Calu3 (cell line): ENCODE measurements at regions of chr3 and their contacts with region 1.

Region 1: GRCh38 chr3:190378240-190378891 is 9.6 kb upstream of the CLDN16 start:
- DNase-seq: no peak
- H3K4me3 Mint-ChIP-seq: no peak overlapping the region
- H3K27ac Mint-ChIP-seq: no peak overlapping the region
- H3K4me1 Mint-ChIP-seq: peaks cover 83% of the 10 kb centered on the region
- H3K27me3 Mint-ChIP-seq: no peaks in the 10 kb centered on the region
- CTCF ChIP-seq: no peak

Region 2: DNA sequence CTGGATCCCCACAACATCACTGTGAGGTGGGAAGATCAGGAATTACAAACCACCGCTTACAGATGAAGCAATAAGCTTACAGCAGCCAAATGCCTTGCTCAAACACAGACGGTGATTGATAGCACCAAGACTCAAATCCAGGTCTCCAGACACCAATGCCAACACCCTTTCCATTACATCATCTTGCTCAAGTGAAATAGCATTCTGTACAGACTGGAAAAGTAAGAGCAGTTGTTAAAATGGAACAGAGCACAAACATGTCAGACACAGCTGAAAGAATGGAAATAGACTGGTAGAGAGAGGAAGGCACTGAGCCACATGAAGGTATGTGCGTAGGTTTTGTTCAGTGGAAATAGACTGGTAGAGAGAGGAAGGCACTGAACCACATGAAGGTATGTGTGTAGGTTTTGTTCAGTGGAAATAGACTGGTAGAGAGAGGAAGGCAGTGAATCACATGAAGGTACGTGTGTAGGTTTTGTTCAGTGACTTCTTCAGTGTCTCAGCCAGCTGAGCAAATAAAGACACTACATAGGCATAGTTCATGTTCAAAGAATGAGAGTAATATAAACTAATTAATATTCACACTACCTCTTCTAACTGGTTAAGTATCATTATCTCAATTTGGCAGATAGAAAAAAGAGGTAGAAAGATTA is 71.7 kb before region 1 on chr3:
- CTCF ChIA-PET with region 1: no interaction called
- intact Hi-C with region 1: loop called (anchors 1 kb)
- DNase-seq: peak; percentile 67
- H3K4me3 Mint-ChIP-seq: peak overlapping the region; percentile 51
- H3K27ac Mint-ChIP-seq: peak overlapping the region; percentile 90
- H3K4me1 Mint-ChIP-seq: peaks cover 61% of the 10 kb centered on the region
- H3K27me3 Mint-ChIP-seq: no peaks in the 10 kb centered on the region
- CTCF ChIP-seq: no peak

Region 3: DNA sequence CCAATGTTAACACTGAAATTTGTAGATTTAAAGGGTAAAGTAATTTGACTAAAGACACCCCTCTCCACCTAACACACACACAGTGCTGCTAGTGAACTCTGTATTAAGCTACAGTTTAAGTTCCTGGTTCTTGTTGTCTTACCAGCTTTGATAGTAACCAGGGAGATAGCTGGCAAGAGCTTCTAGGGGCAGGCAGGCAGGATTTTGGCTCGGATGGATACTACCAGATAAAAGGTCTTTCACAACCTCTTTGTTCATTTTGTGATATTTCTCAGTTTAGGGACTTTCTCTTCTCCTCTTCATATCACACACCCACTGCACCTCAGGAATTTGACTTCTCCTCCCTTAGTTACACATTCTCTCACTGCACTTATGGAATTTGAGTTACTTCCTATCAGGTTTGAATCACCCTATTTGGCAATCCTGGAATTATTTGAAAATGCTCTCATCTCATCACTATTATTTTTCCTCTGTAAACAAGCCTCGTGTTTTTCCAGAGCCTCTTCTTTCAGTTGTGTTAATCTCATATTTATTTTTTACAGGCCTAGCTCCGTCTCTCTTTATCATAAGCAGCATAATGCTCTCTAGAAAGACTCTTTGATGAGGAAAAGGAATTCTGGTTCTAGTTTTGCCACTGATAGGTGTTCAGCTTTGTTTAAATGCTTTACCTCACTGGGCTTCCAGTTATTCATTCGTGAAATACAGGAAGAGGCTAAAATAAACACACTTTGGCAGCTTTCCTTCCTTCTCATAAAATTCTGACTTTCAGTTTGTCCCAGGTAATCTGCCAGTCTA is 33.1 kb before region 1 on chr3:
- CTCF ChIA-PET with region 1: interaction called, 29 read pairs
- intact Hi-C with region 1: loop called (anchors 1 kb)
- DNase-seq: peak; percentile 66
- H3K4me3 Mint-ChIP-seq: peak overlapping the region; percentile 51
- H3K27ac Mint-ChIP-seq: peak overlapping the region; percentile 98
- H3K4me1 Mint-ChIP-seq: peaks cover 51% of the 10 kb centered on the region
- H3K27me3 Mint-ChIP-seq: no peaks in the 10 kb centered on the region
- CTCF ChIP-seq: no peak

Region 4: GRCh38 chr3:190356246-190356645 is 22.1 kb before region 1 on chr3:
- CTCF ChIA-PET with region 1: interaction called, 4 read pairs
- intact Hi-C with region 1: loop called (anchors 1 kb)
- DNase-seq: no peak
- H3K4me3 Mint-ChIP-seq: no peak overlapping the region
- H3K27ac Mint-ChIP-seq: no peak overlapping the region
- H3K4me1 Mint-ChIP-seq: peaks cover 26% of the 10 kb centered on the region
- H3K27me3 Mint-ChIP-seq: no peaks in the 10 kb centered on the region
- CTCF ChIP-seq: no peak

Region 5: DNA sequence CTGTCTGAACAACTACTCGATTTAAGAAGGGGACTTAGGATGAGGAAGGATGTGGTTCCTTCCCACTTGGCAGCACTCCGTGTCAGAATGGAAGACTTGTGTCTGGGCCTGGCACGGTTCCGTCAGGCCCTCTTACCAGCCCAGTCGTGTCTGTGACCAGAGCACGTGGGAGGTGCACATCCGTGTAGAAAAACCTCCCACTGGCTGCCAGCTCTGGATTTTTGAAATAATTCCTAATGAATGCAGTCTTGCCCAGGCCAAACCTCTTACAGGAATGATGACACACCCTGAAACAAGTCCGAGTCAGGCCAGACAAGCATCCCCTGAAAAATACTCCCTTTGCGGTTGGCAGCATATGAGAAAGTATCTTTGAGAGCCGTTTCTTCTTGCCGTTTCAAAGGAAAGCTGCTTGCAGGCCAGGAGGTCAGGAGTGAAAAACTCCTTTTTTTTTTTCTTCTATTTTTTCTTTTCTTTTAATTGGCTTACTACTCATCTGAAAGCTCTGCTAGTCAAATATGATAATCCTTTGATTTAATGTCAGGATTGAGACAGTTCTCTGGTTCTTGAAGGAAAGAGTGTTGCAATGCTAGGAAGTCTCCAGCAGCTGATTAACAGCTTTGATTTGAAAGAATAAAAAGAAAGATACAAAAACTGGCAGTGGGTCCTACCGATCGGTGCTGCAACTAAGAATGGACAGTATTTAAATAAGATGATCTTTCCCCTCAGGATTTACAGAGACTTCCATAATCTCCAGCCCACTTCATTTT is 155.3 kb after region 1 on chr3:
- CTCF ChIA-PET with region 1: no interaction called
- intact Hi-C with region 1: no loop called
- DNase-seq: peak; percentile 75
- H3K4me3 Mint-ChIP-seq: peak overlapping the region; percentile 37
- H3K27ac Mint-ChIP-seq: peak overlapping the region; percentile 95
- H3K4me1 Mint-ChIP-seq: peaks cover 87% of the 10 kb centered on the region
- H3K27me3 Mint-ChIP-seq: no peaks in the 10 kb centered on the region
- CTCF ChIP-seq: no peak